Thyroid gland (tissue), 4 donors: ENCODE measurements at regions of chr14 and their contacts with region 1.

Region 1: GRCh38 chr14:76910371-76910890 is 84.2 kb downstream of the LRRC74A start:
- DNase-seq: no peak
- H3K4me3 ChIP-seq: no peak overlapping the region
- H3K27ac ChIP-seq: no peak overlapping the region
- H3K4me1 ChIP-seq: peaks cover 13 to 31% of the 10 kb centered on the region in 2 donors
- H3K27me3 ChIP-seq: no peaks in the 10 kb centered on the region
- CTCF ChIP-seq: no peak
- POLR2A ChIP-seq: no peak

Region 2: DNA sequence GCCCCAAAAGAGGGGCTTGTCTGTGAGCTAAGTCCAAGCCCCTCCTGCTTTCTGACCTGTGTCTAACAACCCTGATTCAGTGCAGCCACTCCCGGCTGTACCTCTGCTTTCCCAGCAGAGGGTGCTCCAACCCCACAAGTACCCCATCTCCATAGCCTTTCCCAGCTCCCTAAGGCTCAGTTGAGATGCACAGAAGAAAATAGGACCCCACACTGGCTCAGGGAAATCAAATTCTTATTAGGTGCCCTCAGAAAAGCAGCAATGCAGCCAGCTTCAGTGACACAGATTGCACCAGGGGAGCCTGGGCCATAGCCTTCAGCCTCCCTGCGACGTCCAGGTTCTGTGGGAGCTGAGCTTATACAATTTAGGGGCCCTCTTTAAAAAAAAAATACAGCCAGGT is 34.4 kb before region 1 on chr14:
- intact Hi-C with region 1: loop called (anchors 5 kb)
- DNase-seq: peak; percentile 52 to 62
- H3K4me3 ChIP-seq: no peak overlapping the region
- H3K27ac ChIP-seq: no peak overlapping the region
- H3K4me1 ChIP-seq: no peaks in the 10 kb centered on the region
- H3K27me3 ChIP-seq: no peaks in the 10 kb centered on the region
- CTCF ChIP-seq: peak; percentile 68 to 97 (median 95)
- POLR2A ChIP-seq: no peak

Region 3: DNA sequence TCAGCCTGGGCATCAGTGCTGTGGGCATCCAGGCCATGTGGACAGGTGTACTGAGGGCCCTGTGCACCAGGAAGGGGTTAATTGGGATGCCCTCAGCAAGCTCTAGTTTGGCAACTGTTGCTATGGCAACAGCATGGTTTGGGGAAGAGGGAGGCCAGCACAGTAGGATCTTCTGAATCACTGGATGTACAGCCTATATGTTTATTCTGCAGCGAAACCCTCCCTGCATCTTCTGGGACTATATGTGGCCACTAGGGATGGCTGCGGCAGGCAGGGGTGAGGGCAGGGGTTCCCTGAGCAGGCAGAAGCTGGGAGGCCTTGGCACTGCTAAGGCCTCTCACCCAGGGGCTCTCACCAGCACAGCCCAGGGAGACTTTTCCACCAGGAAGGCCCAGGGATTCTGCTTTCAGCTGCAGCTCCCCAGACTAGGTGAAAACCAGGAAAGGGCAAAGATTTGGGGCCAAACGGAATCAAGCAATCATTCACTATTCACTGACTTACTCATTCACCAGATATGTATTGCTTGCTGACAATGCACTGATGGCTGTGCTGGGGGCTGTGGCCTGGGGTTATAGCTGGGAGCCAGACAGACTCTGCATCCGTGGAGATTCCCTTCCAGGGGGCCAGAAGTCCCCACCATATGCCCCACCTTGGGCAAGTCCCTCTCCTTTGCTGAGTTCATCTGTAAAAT is 75.3 kb after region 1 on chr14:
- intact Hi-C with region 1: no loop called
- DNase-seq: no peak
- H3K4me3 ChIP-seq: no peak overlapping the region
- H3K27ac ChIP-seq: no peak overlapping the region
- H3K4me1 ChIP-seq: no peaks in the 10 kb centered on the region
- H3K27me3 ChIP-seq: no peaks in the 10 kb centered on the region
- CTCF ChIP-seq: no peak
- POLR2A ChIP-seq: no peak

Region 4: GRCh38 chr14:77053046-77053841 is 142.8 kb after region 1 on chr14:
- intact Hi-C with region 1: loop called (anchors 5 kb)
- DNase-seq: peak; percentile 81 to 83
- H3K4me3 ChIP-seq: no peak overlapping the region
- H3K27ac ChIP-seq: peak overlapping the region in 2 of 3 donors; percentile 3 to 70
- H3K4me1 ChIP-seq: peaks cover 4 to 18% of the 10 kb centered on the region in 2 donors
- H3K27me3 ChIP-seq: no peaks in the 10 kb centered on the region
- CTCF ChIP-seq: peak; percentile 82 to 98 (median 90)
- POLR2A ChIP-seq: no peak

Region 5: DNA sequence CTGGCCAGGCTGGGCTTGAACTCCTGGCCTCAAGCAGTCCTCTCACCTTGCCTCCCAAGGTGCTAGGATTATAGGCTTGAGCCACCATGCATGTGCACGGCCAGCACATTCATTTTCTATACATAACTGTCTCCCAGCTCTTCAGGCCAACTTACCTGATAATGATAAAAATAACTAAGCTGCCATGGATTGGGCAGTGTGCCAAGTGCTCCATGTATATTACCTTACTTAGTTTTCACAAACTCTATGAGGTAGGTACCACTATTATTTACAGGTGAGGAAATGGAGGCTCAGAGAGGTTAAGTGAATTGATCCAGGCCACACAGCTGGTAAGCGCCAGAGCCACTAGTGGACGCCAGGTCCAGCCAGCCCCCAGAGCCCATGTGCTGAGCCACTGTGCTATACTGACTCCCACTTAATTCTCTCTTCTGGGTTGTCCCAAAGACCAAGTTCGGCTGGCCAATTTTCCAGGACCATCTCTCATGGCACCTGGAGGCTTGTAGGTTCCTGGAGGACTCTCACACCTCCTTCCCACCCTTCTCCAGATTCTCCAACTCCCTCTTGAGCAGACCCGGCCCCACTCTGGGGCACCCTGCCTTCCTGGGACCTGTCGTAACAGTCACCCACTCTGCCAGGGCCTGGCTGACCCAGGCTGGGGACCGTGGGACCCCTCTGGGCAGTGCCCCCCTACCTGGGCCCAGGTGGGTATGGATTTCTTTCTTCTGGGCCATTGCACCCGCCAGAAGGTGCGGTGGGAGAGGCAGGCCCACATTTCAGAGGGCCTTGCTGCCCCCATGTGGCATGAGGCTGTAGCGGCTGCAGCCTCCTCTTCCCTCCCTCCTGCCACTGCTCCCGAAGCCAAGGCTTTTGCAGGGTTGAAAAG is 157.4 kb after region 1 on chr14:
- intact Hi-C with region 1: loop called (anchors 5 kb)
- DNase-seq: peak; percentile 74 to 76
- H3K4me3 ChIP-seq: no peak overlapping the region
- H3K27ac ChIP-seq: no peak overlapping the region
- H3K4me1 ChIP-seq: peaks cover 5 to 22% of the 10 kb centered on the region in 2 donors
- H3K27me3 ChIP-seq: no peaks in the 10 kb centered on the region
- CTCF ChIP-seq: peak; percentile 63 to 94 (median 86)
- POLR2A ChIP-seq: no peak